Activated CD4-positive, alpha-beta memory T cell treated with anti-CD3 and anti-CD28 coated beads for 36 hours (primary cell): ENCODE measurements at regions of chr7 and their contacts with region 1.

Region 1: DNA sequence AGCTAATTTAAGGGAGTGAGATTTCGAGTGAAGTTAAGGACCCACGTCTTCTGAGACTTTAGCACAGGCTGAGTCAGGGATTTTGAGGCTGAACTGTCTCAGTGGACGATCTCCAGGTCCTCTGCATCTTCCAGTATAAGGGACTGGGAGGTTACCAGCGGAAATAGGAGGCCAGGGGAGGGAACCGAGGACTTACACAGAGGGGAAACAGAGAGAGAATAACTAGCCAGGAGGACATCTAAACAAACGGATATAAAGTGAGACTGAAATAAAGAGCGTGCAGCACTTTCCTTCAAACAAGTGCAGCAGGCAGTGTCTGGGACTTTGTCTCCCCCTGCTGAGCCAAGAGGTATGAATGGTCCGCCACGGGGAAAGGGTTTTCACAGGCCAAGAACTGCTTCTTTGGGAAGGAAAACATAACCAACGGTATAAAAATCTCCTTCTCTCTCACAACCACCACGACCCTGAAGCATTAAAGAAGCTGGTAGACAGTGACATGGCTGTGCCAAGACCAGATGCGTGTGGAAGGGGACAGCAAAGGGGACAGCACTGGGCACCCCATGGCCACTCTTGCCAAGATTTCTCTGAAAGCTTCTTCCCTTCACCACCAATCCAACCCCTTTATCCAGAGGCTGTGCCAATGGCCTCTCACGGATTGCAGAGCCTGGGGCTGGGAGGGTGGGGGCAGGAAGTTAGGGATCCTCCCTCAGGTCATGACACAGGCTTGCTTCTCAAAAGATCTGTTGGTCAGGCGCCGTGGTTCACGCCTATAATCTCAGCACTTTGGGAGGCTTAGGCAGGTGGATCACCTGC is 72.0 kb downstream of the SLC37A3 start:
- DNase-seq: peak; percentile 63
- H3K4me3 Mint-ChIP-seq: no peak overlapping the region
- H3K27ac Mint-ChIP-seq: no peak overlapping the region
- H3K4me1 Mint-ChIP-seq: no peaks in the 10 kb centered on the region
- H3K27me3 Mint-ChIP-seq: no peaks in the 10 kb centered on the region

Region 2: GRCh38 chr7:140168816-140169215 is 157.5 kb before region 1 on chr7:
- CTCF ChIA-PET with region 1: interaction called, 5 read pairs
- POLR2A ChIA-PET with region 1: no interaction called
- intact Hi-C with region 1: loop called (anchors 1 kb)
- DNase-seq: no peak
- H3K4me3 Mint-ChIP-seq: no peak overlapping the region
- H3K27ac Mint-ChIP-seq: no peak overlapping the region
- H3K4me1 Mint-ChIP-seq: peaks cover 76% of the 10 kb centered on the region
- H3K27me3 Mint-ChIP-seq: no peaks in the 10 kb centered on the region